ENCODE measurements at regions of chr4 and their contacts with region 1.

Region 1: GRCh38 chr4:183012879-183013728 is 86.0 kb upstream of the WWC2 start:
- DNase-seq: peak; percentile 21
- ATAC-seq: peak; percentile 85
- H3K4me3 Mint-ChIP-seq: peak overlapping the region; percentile 69
- H3K27ac Mint-ChIP-seq: no peak overlapping the region
- H3K4me1 Mint-ChIP-seq: peaks cover 11% of the 10 kb centered on the region
- H3K27me3 Mint-ChIP-seq: no peaks in the 10 kb centered on the region; the same call in 1 of the 2 replicates
- CTCF ChIP-seq: no peak

Region 2: DNA sequence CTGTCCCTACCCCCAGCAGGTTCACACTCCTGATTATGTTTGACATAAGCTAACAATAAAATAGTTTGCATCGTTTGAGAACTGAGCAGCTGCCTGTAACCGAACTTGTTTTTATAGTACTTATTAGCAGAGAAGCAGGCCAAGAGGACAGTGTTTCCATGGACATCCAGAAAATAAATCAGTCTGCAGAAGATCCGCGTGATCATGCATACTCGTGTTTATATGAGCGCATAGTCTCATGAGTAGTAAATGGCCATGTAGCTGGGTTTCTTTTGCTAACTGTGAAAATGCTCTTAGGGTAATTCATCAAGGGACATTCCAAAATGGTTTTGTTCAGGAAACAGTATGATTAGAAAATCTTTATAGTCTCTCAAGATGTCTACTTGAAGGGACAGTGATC is 385.1 kb before region 1 on chr4:
- CTCF ChIA-PET with region 1: no interaction called
- POLR2A ChIA-PET with region 1: no interaction called
- DNase-seq: no peak
- ATAC-seq: no peak
- H3K4me3 Mint-ChIP-seq: no peak overlapping the region
- H3K27ac Mint-ChIP-seq: peak overlapping the region; percentile 44; the same call in 1 of the 2 replicates
- H3K4me1 Mint-ChIP-seq: peaks cover 25% of the 10 kb centered on the region
- H3K27me3 Mint-ChIP-seq: no peaks in the 10 kb centered on the region
- CTCF ChIP-seq: no peak

Region 3: GRCh38 chr4:182938205-182938645 is 74.9 kb before region 1 on chr4:
- CTCF ChIA-PET with region 1: interaction called, 21 read pairs
- POLR2A ChIA-PET with region 1: no interaction called
- DNase-seq: peak; percentile 86
- ATAC-seq: peak; percentile 100
- H3K4me3 Mint-ChIP-seq: no peak overlapping the region
- H3K27ac Mint-ChIP-seq: no peak overlapping the region
- H3K4me1 Mint-ChIP-seq: peaks cover 16% of the 10 kb centered on the region
- H3K27me3 Mint-ChIP-seq: peaks cover 6% of the 10 kb centered on the region; the same call in 1 of the 2 replicates
- CTCF ChIP-seq: peak; percentile 86

Region 4: GRCh38 chr4:183026701-183027100 is 13.6 kb after region 1 on chr4:
- CTCF ChIA-PET with region 1: interaction called, 11 read pairs
- POLR2A ChIA-PET with region 1: no interaction called
- DNase-seq: no peak
- ATAC-seq: no peak
- H3K4me3 Mint-ChIP-seq: no peak overlapping the region
- H3K27ac Mint-ChIP-seq: no peak overlapping the region
- H3K4me1 Mint-ChIP-seq: peaks cover 6% of the 10 kb centered on the region; the same call in 1 of the 2 replicates
- H3K27me3 Mint-ChIP-seq: no peaks in the 10 kb centered on the region
- CTCF ChIP-seq: no peak

Measured in WTC11 (cell line).